ENCODE measurements at regions of chr7 and their contacts with region 1.

Region 1: DNA sequence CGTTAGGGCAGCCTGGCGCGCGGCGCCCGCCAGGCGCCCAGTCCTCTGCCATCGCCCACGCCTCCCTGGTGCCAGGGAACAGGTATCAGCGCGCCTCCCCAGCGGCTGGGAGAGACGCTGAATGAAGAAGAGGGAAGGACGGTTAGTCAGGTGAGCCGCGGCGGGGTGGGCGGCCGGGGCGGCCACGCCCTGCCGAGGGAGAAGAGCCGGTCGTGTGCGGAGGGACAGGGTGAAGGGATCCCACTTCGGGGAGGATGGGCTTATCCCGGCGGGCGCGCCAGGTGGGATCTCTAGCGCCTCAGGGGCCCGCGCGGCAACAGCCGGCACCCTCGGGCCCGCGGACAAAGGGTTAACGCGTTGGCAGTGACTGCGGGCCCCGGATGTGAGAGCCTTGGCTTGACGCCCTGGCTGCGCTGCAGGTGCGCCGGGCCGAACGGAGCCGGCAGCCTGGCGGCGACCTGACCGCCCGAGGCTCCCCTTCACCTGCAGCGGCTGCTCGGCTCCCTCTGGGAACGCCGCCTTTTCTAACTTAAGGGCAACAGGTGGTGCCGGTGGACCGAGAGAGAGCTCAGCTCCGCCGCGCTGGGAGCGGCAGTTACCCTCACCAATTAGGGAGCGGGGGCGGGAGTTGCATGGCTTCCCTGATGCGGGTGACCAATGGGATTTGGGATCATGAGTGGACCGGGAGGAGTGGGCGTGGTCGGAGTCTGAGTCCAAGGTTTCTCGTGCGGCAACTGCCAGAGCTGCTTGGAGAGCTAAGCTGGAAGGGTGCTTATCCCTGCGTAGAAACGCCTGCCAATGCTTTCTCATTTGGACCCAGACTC is at the start of gene ARL4A:
- DNase-seq: peak; percentile 100
- H3K4me3 Mint-ChIP-seq: peak within 1 kb of the TSS; percentile 78
- H3K27ac Mint-ChIP-seq: peak within 1 kb of the TSS; percentile 86
- H3K4me1 Mint-ChIP-seq: peaks cover 50% of the 10 kb centered on the region
- H3K27me3 Mint-ChIP-seq: no peaks in the 10 kb centered on the region
- CTCF ChIP-seq: peak; percentile 10
- total RNA-seq, gene ARL4A: 30.6 and 31.9 TPM in 2 replicates

Region 2: GRCh38 chr7:12638851-12639467 is 48.1 kb before region 1 on chr7:
- CTCF ChIA-PET with region 1: interaction called, 13 read pairs
- intact Hi-C with region 1: loop called (anchors 1 kb)
- DNase-seq: no peak
- H3K4me3 Mint-ChIP-seq: no peak overlapping the region
- H3K27ac Mint-ChIP-seq: no peak overlapping the region
- H3K4me1 Mint-ChIP-seq: peaks cover 8% of the 10 kb centered on the region
- H3K27me3 Mint-ChIP-seq: no peaks in the 10 kb centered on the region
- CTCF ChIP-seq: peak; percentile 74

Region 3: GRCh38 chr7:12706876-12707536 is 19.9 kb after region 1 on chr7:
- CTCF ChIA-PET with region 1: interaction called, 12 read pairs
- intact Hi-C with region 1: no loop called
- DNase-seq: no peak
- H3K4me3 Mint-ChIP-seq: no peak overlapping the region
- H3K27ac Mint-ChIP-seq: peak overlapping the region; percentile 7
- H3K4me1 Mint-ChIP-seq: peaks cover 26% of the 10 kb centered on the region
- H3K27me3 Mint-ChIP-seq: no peaks in the 10 kb centered on the region
- CTCF ChIP-seq: no peak

Region 4: GRCh38 chr7:12761111-12761510 is 74.0 kb after region 1 on chr7:
- CTCF ChIA-PET with region 1: no interaction called
- intact Hi-C with region 1: no loop called
- DNase-seq: no peak
- H3K4me3 Mint-ChIP-seq: no peak overlapping the region
- H3K27ac Mint-ChIP-seq: no peak overlapping the region
- H3K4me1 Mint-ChIP-seq: no peaks in the 10 kb centered on the region
- H3K27me3 Mint-ChIP-seq: no peaks in the 10 kb centered on the region
- CTCF ChIP-seq: no peak

Region 5: DNA sequence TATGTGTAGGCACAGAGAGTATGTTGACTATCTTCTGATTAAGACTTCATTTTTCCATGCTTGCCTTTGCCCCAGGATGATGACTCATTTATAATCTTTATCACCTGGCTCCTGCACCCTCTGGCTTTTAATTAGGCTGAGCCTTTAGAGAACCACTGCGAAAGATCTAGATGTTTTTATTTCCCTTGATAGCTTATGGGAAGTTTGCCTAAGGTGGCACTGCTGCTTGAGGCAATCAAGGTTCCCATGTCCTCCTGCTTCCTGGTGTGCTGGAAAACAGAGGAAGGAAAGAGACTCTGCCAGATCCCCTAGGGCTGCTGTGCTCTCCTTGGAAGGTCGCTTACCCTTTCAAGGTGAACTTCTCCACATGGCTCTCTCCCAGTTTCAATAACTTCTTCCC is 115.0 kb after region 1 on chr7:
- CTCF ChIA-PET with region 1: interaction called, 7 read pairs
- intact Hi-C with region 1: loop called (anchors 2 kb)
- DNase-seq: peak; percentile 18
- H3K4me3 Mint-ChIP-seq: peak overlapping the region; percentile 56
- H3K27ac Mint-ChIP-seq: peak overlapping the region; percentile 92
- H3K4me1 Mint-ChIP-seq: peaks cover 43% of the 10 kb centered on the region
- H3K27me3 Mint-ChIP-seq: no peaks in the 10 kb centered on the region
- CTCF ChIP-seq: no peak

Region 6: DNA sequence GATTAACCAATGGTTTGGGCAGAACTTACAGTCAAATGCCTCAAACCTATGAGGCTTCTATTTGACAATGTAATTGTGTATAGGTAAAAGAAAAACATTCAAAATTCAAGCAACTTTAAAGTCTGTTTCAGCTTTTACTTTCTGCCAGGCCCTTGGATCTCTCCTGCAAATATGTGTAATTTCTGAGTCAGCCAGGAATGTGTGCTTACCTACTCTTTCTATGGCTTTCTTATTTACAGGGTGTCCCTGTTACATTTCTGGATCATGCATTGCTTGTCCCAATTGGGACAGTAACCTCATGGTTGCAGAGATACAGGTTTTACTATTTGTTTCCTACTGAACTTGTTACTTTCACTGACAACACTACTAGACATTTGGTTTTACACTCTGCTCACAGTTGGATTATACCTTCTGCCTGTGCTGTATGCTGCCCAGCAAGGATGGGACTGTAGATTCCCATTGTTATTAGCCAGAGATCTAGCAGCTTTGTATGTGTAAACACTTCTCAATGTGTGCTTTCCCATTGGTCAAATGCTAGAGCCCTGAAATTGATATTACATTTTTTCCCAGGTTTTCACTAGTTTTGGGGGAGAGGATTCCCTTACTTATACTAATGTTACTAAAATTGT is 355.6 kb after region 1 on chr7:
- CTCF ChIA-PET with region 1: no interaction called
- intact Hi-C with region 1: loop called (anchors 5 kb)
- DNase-seq: no peak
- H3K4me3 Mint-ChIP-seq: no peak overlapping the region
- H3K27ac Mint-ChIP-seq: no peak overlapping the region
- H3K4me1 Mint-ChIP-seq: peaks cover 18% of the 10 kb centered on the region
- H3K27me3 Mint-ChIP-seq: no peaks in the 10 kb centered on the region
- CTCF ChIP-seq: no peak

Region 7: GRCh38 chr7:13179102-13179501 is 492.0 kb after region 1 on chr7:
- CTCF ChIA-PET with region 1: interaction called, 7 read pairs
- intact Hi-C with region 1: loop called (anchors 2 kb)
- DNase-seq: no peak
- H3K4me3 Mint-ChIP-seq: no peak overlapping the region
- H3K27ac Mint-ChIP-seq: no peak overlapping the region
- H3K4me1 Mint-ChIP-seq: peaks cover 13% of the 10 kb centered on the region
- H3K27me3 Mint-ChIP-seq: no peaks in the 10 kb centered on the region
- CTCF ChIP-seq: no peak